Activated naive CD4-positive, alpha-beta T cell treated with anti-CD3 and anti-CD28 coated beads for 36 hours (primary cell): ENCODE measurements at regions of chr16 and their contacts with region 1.

Region 1: DNA sequence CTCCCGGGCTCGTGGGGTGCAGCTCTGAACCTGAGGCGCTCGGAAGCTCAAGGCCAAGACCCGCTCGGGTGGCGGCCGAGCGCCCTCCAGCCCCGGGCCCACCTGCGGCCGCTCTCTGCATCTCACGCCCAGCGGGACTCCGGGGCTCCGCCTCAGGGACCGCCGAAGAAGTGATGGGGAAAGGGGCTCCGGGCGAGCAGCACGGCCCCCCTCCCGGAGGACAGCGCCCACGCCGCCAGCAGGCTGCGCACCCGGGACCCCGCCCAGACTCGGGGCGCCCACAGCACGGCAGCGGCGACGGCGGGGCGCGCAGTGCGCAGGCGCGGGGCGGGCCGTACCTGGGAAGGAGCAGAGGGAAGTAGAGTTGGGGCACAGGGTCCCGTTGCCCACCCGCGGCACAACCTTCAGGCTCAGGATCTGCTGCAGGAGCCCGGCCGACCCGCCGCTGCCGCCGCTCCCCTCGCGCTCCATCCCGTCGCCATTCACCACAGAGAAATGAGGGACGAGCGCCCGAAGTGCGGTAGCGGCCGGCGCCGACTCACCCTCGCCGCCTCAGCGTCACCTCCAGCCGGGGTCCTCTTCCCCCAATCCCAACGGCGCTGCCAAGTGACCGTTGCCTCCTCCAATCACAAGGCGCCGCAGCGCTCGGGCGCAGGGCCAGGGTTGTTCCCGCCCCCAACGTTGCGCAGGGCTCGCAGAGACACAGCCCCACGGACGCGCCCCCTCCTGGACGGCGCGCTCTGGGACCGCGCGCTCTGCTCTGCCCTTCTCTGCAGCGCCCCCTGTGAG is at the start of gene TMEM170A:
- DNase-seq: peak; percentile 99
- H3K4me3 Mint-ChIP-seq: peak within 1 kb of the TSS; percentile 87
- H3K27ac Mint-ChIP-seq: peak within 1 kb of the TSS; percentile 88
- H3K4me1 Mint-ChIP-seq: peaks cover 43% of the 10 kb centered on the region
- H3K27me3 Mint-ChIP-seq: no peaks in the 10 kb centered on the region
- total RNA-seq, gene TMEM170A: 18.8 to 19.0 TPM

Region 2: DNA sequence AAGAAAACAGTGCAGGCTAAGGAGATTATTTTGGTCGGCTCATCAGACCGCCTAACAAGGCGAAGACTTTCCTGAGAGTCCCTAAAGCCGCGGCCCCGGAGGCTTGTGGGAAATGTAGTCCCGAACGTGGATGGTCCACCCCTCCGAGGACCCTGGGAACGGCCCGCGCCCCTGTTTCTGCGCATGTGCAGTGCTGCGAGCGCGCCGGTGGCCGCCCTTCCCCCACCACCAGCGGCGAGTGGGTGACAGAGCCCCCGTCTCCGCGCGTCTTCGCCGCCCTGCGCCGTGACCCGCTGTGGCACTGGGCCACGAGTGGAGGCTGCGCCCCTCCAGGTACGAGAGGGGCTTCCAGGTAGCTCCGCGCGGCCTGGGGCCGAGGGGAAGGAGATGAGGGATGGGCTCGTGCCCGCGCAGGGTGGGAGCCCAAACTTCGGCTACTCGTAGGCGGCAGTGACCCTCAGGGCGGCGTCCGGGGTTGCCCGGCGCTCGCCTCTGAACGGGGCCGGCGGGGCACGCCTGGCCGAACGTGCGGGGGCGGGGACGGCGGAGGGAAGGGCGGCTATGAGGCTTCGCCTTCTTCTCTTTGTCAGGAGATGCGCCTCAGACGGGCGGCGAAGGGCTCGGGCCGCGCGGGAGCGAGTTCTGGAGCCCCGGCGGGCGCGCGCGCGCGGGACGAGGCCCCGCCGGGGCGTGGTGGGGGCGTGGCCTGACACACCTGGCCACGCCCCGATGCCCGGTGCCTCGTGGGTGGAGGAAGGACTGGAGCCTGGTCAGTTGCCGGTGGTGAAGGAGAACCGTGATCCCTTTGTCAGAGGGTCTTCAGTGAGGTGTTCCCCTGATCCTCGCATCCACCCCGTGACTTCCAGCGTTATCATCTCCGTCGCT is 315.8 kb before region 1 on chr16 and contains the start of gene ZFP1:
- CTCF ChIA-PET with region 1: no interaction called
- intact Hi-C with region 1: loop called (anchors 1 kb)
- DNase-seq: peak; percentile 97
- H3K4me3 Mint-ChIP-seq: peak within 1 kb of the TSS; percentile 80
- H3K27ac Mint-ChIP-seq: peak within 1 kb of the TSS; percentile 73
- H3K4me1 Mint-ChIP-seq: peaks cover 37% of the 10 kb centered on the region
- H3K27me3 Mint-ChIP-seq: no peaks in the 10 kb centered on the region
- total RNA-seq, gene ZFP1: 20.2 to 20.9 TPM

Region 3: GRCh38 chr16:75305364-75306098 is 158.8 kb before region 1 on chr16:
- CTCF ChIA-PET with region 1: no interaction called
- intact Hi-C with region 1: loop called (anchors 1 kb)
- DNase-seq: peak; percentile 94
- H3K4me3 Mint-ChIP-seq: peak overlapping the region; percentile 36
- H3K27ac Mint-ChIP-seq: peak overlapping the region; percentile 90
- H3K4me1 Mint-ChIP-seq: peaks cover 29% of the 10 kb centered on the region
- H3K27me3 Mint-ChIP-seq: no peaks in the 10 kb centered on the region

Region 4: GRCh38 chr16:75432828-75433731 is 31.2 kb before region 1 on chr16 and contains the start of gene CFDP1:
- CTCF ChIA-PET with region 1: interaction called, 12 read pairs
- intact Hi-C with region 1: loop called (anchors 1 kb)
- DNase-seq: peak; percentile 96
- H3K4me3 Mint-ChIP-seq: peak within 1 kb of the TSS; percentile 81
- H3K27ac Mint-ChIP-seq: peak within 1 kb of the TSS; percentile 93
- H3K4me1 Mint-ChIP-seq: peaks cover 30% of the 10 kb centered on the region
- H3K27me3 Mint-ChIP-seq: no peaks in the 10 kb centered on the region
- total RNA-seq, gene CFDP1: 37.2 to 44.1 TPM

Region 5: DNA sequence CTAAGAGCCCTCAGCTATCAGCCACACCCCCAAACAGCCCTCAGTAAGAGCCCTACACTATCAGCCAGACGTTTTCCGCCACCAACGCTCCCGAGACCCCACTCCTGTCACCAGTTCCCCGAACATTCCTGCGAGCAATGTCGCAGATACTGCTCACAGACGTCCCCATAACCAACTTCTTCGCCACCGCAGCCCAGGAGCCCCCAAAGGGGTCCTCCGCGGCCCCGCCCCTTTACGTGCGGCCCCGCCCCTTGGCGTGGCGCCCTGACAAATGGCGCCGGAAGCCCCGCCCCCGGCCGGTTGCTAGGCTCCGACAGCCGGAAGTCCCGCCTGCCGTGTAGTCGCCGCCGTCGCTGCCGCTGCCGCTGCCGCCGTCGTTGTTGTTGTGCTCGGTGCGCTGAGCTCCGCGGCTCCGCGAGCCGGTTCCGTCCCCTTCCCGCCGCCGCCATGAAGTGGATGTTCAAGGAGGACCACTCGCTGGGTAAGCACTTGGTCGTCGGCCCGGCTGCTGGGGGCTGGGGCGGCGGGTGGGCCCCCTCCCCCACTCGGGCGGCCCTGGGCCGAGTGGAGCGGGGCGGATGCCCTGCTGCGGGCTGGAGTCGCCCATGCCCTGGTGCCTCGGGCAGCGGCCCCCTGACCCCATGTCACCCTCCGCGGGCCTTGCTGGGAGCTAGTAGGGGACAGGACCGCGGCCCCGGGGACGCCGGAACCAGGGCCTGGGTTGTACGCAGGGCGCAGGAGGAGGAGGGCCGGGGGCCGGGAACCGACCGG is 101.9 kb after region 1 on chr16 and contains the start of gene GABARAPL2:
- CTCF ChIA-PET with region 1: interaction called, 13 read pairs
- intact Hi-C with region 1: loop called (anchors 1 kb)
- DNase-seq: peak; percentile 89
- H3K4me3 Mint-ChIP-seq: peak within 1 kb of the TSS; percentile 98
- H3K27ac Mint-ChIP-seq: peak within 1 kb of the TSS; percentile 94
- H3K4me1 Mint-ChIP-seq: peaks cover 38% of the 10 kb centered on the region
- H3K27me3 Mint-ChIP-seq: peaks cover 3% of the 10 kb centered on the region
- total RNA-seq, gene GABARAPL2: 63.3 to 66.8 TPM

Region 6: GRCh38 chr16:77190478-77191258 is 1726.3 kb after region 1 on chr16 and contains the start of gene MON1B:
- CTCF ChIA-PET with region 1: no interaction called
- intact Hi-C with region 1: loop called (anchors 1 kb)
- DNase-seq: peak; percentile 96
- H3K4me3 Mint-ChIP-seq: peak within 1 kb of the TSS; percentile 82
- H3K27ac Mint-ChIP-seq: peak within 1 kb of the TSS; percentile 99
- H3K4me1 Mint-ChIP-seq: peaks cover 29% of the 10 kb centered on the region
- H3K27me3 Mint-ChIP-seq: no peaks in the 10 kb centered on the region
- total RNA-seq, gene MON1B: 69.6 to 71.0 TPM